KBM-7 (cell line): ENCODE measurements at regions of chr22 and their contacts with region 1.

Region 1: GRCh38 chr22:16932577-16932976 is 75.4 kb downstream of the GAB4 start:
- DNase-seq: no peak

Region 2: DNA sequence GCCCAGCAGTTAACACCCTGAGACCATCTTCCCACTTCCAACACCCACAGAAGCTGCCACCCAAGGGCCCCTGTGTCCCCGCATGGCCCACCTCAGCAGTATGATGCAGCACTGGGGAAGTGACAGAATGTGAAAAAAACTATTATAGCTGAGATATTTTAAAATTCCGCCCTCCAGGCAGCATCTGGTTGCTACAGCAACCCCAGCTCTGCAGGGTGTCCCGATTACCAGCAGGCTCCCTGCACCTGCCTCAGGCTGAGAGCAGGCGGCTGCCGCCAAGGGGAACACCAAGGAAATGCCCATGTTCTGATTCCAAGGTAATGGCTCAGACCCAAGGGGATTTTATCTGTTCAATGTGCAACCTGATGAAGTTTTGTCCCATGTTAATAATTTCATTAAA is 199.1 kb after region 1 on chr22:
- in situ Hi-C with region 1: no loop called
- DNase-seq: no peak

Region 3: GRCh38 chr22:17199003-17199731 is 266.6 kb after region 1 on chr22:
- in situ Hi-C with region 1: loop called (anchors 25 kb)
- DNase-seq: no peak

Region 4: DNA sequence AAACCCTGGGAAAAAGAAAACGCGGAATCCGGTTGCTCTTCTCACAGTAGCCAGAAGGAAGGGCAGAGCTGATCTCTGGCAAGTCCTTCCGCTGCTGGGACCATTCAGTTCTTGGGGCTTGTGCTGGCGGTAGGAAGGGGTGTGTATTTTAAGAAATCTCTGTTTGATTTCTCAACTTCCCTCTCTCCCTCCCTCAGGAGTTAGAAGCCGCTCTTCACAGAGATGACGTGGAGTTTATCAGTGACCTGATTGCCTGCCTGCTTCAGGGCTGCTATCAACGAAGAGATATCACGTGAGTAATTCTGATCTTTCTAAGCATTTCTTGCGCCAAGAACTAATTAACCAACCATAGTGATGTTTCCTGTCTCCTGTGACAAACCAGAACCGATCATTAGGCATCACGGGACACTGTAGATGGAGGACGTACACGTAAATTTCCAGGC is 544.8 kb after region 1 on chr22:
- in situ Hi-C with region 1: loop called (anchors 25 kb)
- DNase-seq: peak; percentile 37